ENCODE measurements at regions of chr4 and their contacts with region 1.

Region 1: DNA sequence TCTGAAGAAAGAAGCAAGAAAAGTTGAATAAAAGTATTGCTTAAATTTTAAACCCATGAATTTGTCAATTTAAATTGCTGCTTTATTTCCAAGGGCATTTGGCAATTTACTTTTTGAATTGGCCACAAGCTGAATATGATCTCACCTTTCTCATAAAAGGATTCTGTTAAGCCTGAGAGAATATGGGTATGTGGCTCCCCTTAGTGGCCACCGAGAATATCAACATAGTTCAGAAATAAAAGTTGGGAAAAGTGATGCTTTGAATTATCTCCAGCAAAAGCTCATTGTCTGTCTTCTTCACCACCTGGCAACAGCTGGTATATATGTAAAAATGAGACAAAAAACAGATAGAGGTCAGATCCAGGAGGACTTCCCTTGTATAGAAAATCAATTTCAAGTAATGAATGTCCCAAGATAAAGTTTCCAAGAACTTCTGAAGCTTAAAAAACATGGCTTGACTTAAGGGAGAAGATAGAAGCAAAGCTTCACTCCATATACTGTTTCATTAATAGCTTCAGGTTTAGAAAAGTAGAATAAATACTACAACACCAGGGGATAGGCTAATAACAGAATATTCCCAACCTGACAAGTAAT is 290.7 kb upstream of the FAM241A start:
- DNase-seq: peak; percentile 1
- H3K4me3 ChIP-seq: no peak overlapping the region
- H3K27ac ChIP-seq: no peak overlapping the region
- H3K27me3 ChIP-seq: no peaks in the 10 kb centered on the region
- CTCF ChIP-seq: peak; percentile 68

Region 2: GRCh38 chr4:111641955-111642579 is 212.5 kb before region 1 on chr4:
- CTCF ChIA-PET with region 1: interaction called, 29 read pairs
- POLR2A ChIA-PET with region 1: no interaction called
- DNase-seq: peak; percentile 64
- H3K4me3 ChIP-seq: no peak overlapping the region
- H3K27ac ChIP-seq: no peak overlapping the region
- H3K27me3 ChIP-seq: no peaks in the 10 kb centered on the region
- CTCF ChIP-seq: peak; percentile 87

Region 3: GRCh38 chr4:112031712-112032328 is 177.2 kb after region 1 on chr4:
- CTCF ChIA-PET with region 1: interaction called, 14 read pairs
- POLR2A ChIA-PET with region 1: no interaction called
- DNase-seq: peak; percentile 10
- H3K4me3 ChIP-seq: no peak overlapping the region
- H3K27ac ChIP-seq: no peak overlapping the region
- H3K27me3 ChIP-seq: no peaks in the 10 kb centered on the region
- CTCF ChIP-seq: peak; percentile 81